Endothelial cell of umbilical vein (primary cell): ENCODE measurements at regions of chr12 and their contacts with region 1.

Region 1: DNA sequence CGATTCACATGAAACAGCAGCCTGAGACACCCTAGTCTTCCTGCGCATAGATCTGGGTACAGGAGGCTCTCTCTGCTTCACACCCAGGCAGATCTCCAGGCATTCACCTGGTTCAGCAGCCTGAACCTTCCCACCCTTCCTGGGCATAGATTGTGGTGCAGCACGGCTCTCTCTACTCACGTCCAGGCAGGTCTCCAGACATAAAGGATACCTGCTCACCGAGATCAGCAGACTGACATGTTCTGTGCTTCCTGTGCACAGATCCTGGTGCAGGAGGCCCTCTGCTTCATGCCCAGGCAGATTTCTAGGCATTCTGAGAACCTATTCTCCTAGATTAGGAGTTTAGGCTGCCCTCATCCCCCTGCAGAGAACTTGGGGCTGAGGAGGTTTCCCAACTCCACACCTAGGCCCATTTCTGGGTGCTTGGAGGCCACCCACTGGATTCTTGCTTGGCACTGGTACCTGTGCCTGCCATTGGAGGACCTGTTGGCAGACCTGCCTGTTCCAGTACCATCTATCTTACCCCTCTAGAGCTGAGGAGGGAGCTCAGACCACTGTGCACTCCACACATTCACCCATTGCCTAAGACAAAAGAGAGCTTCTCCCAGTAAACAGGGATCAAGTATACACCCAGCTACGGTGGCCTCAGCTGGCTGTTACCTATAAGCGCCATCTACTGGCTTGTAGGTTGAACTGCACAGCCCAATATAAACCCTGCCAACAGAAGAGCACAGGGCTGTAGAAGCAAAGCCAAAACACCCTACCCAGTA is 28.0 kb upstream of the GARIN6 start:
- DNase-seq: no peak
- H3K4me3 ChIP-seq: no peak overlapping the region
- H3K27ac ChIP-seq: no peak overlapping the region
- H3K4me1 ChIP-seq: no peaks in the 10 kb centered on the region
- H3K27me3 ChIP-seq: no peaks in the 10 kb centered on the region
- CTCF ChIP-seq: peak; percentile 10 to 15
- POLR2A ChIP-seq: no peak

Region 2: GRCh38 chr12:99381992-99382391 is 237.6 kb before region 1 on chr12:
- CTCF ChIA-PET with region 1: no interaction called
- POLR2A ChIA-PET with region 1: no interaction called
- dilution Hi-C with region 1: no loop called
- intact Hi-C with region 1: no loop called
- DNase-seq: no peak
- H3K4me3 ChIP-seq: no peak overlapping the region
- H3K27ac ChIP-seq: no peak overlapping the region
- H3K4me1 ChIP-seq: no peaks in the 10 kb centered on the region
- H3K27me3 ChIP-seq: no peaks in the 10 kb centered on the region
- CTCF ChIP-seq: no peak
- POLR2A ChIP-seq: no peak

Region 3: DNA sequence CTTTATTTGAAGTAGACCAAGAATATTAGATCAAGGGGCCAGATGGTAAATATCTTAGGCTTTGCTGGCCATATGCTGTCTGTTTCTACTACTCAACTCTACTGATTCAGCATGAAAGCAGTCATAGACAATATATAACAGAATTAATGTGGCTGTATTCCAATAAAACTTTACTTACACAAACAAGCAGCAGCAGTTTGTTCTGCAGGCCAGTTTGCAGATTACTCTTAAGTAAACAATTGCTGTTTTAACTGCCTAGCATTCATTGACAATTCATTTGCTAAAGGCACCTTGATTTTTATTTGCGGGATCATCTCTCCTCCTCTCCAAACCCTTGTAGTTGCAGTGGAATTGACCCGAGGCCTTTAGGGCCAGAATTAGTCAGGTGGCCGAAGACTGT is 66.1 kb before region 1 on chr12:
- CTCF ChIA-PET with region 1: no interaction called
- POLR2A ChIA-PET with region 1: no interaction called
- dilution Hi-C with region 1: no loop called
- intact Hi-C with region 1: no loop called
- DNase-seq: no peak
- H3K4me3 ChIP-seq: no peak overlapping the region
- H3K27ac ChIP-seq: no peak overlapping the region
- H3K4me1 ChIP-seq: no peaks in the 10 kb centered on the region
- H3K27me3 ChIP-seq: no peaks in the 10 kb centered on the region
- CTCF ChIP-seq: no peak
- POLR2A ChIP-seq: no peak

Region 4: DNA sequence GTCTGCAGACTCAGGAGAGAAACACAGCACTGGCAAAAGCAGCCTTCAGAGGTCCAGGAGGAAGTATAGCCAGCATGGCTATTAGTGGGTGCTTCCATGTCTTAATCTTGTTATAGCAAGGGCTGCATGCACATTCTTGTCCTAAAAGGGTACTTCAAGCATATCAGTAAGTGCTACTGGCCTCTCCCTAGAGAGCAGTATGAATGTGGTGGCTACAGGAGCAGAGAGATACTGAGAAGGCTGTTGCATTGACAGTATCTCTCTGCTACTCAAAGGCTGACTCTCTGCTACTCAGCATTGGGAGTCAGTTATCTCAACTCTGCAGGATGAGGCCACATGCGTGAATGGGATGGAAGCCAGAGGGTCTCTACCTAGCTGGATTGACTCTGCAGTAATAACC is 30.0 kb after region 1 on chr12:
- CTCF ChIA-PET with region 1: no interaction called
- POLR2A ChIA-PET with region 1: no interaction called
- dilution Hi-C with region 1: no loop called
- intact Hi-C with region 1: loop called (anchors 1 kb)
- DNase-seq: no peak
- H3K4me3 ChIP-seq: no peak overlapping the region
- H3K27ac ChIP-seq: no peak overlapping the region
- H3K4me1 ChIP-seq: no peaks in the 10 kb centered on the region
- H3K27me3 ChIP-seq: no peaks in the 10 kb centered on the region
- CTCF ChIP-seq: no peak
- POLR2A ChIP-seq: no peak